MCF 10A (cell line): ENCODE measurements at regions of chr9 and their contacts with region 1.

Region 1: DNA sequence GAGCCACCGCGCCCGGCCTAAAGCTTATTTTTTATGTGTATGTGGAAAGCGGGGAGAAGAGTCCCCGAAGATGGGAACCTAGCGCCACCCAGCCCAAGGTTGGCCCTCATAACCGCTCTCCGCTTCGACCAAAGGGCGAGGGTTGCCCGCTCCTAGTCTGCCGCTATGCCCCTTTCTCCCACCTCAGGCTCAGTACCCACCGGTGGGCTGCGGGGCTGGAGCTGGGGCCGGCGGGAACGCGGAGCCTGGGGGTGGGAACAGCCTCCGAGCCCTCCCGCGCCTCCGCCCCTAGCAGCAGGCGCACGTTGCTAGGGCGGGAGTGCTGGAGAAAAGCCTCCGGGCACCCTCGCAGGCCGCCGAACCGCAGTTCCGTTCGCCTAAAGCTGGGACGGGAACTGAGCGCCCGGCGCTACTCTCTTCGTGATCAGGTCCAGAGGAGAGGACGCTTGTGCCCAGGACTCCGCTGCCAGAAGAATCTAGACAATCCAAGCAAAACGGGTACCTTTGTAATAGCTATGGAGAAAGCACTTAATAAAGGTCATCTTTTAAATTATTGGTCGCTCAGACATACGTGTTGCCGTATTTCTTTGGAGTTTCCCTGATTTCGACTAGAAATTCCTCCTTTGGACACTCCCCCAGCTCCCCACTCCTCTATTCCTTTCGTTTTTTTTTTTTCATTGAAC is at the start of gene WDR31:
- DNase-seq: peak; percentile 82
- H3K4me3 Mint-ChIP-seq: peak within 1 kb of the TSS; percentile 80
- H3K27ac Mint-ChIP-seq: peak within 1 kb of the TSS; percentile 76
- H3K4me1 Mint-ChIP-seq: peaks cover 20% of the 10 kb centered on the region
- H3K27me3 Mint-ChIP-seq: no peaks in the 10 kb centered on the region
- CTCF ChIP-seq: no peak
- total RNA-seq, gene WDR31: 2.3 and 2.9 TPM in 2 replicates

Region 2: GRCh38 chr9:113237026-113237425 is 103.1 kb before region 1 on chr9:
- CTCF ChIA-PET with region 1: no interaction called
- POLR2A ChIA-PET with region 1: no interaction called
- intact Hi-C with region 1: no loop called
- DNase-seq: no peak
- H3K4me3 Mint-ChIP-seq: no peak overlapping the region
- H3K27ac Mint-ChIP-seq: no peak overlapping the region
- H3K4me1 Mint-ChIP-seq: peaks cover 6% of the 10 kb centered on the region
- H3K27me3 Mint-ChIP-seq: no peaks in the 10 kb centered on the region
- CTCF ChIP-seq: no peak

Region 3: GRCh38 chr9:113410207-113410864 is 70.2 kb after region 1 on chr9 and contains the starts of genes C9orf43 and POLE3:
- CTCF ChIA-PET with region 1: interaction called, 5 read pairs
- POLR2A ChIA-PET with region 1: interaction called, 14 read pairs
- intact Hi-C with region 1: no loop called
- DNase-seq: peak; percentile 96
- H3K4me3 Mint-ChIP-seq: peak within 1 kb of the TSS; percentile 77
- H3K27ac Mint-ChIP-seq: peak within 1 kb of the TSS; percentile 96
- H3K4me1 Mint-ChIP-seq: peaks cover 18% of the 10 kb centered on the region
- H3K27me3 Mint-ChIP-seq: no peaks in the 10 kb centered on the region
- CTCF ChIP-seq: no peak
- total RNA-seq, gene C9orf43: 0.84 and 1.1 TPM in 2 replicates
- total RNA-seq, gene POLE3: 51.8 and 54.0 TPM in 2 replicates